GM18951 (cell line): ENCODE measurements at regions of chr15 and their contacts with region 1.

Region 1: DNA sequence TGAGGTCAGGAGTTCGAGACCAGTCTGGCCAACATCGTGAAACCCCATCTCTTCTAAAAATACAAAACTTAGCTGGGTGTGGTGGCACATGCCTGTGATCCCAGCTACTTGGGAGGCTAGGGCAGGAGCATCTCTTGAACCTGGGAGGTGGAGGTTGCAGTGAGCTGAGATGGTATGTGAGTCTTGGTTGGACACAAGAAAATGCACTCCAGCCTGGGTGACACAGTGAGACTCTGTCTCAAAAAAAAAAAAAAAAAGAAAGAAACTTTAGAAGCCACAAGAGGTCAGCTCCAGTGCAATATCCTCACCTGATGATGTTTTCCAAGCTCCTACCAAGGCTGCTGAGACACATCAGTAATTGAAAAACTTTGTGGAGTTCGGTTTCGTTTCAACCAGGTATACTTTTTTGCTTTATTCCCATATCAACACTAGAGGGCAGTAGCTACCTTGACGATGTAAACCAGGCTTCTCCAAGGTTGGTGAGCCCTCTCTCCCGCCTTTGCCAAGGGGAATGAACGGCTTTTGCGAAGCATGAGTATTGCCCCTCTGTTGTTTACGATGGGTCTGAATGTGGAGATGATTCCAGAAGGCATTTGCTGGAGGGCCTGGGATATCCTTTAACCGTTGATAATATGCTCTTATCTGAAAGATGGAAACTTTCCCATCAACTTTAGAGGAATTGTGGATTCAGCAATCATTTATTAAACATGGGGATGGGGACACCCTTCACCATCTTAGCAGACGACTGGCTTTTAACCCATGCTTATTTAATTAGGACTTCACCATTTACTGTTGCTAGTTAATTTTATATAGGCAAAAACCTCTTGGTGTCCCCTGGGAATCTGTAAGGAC is 202.8 kb downstream of the SV2B start:
- POLR2A ChIP-seq: no peak

Region 2: GRCh38 chr15:91535856-91536500 is 233.2 kb after region 1 on chr15:
- in situ Hi-C with region 1: no loop called
- POLR2A ChIP-seq: no peak

Region 3: DNA sequence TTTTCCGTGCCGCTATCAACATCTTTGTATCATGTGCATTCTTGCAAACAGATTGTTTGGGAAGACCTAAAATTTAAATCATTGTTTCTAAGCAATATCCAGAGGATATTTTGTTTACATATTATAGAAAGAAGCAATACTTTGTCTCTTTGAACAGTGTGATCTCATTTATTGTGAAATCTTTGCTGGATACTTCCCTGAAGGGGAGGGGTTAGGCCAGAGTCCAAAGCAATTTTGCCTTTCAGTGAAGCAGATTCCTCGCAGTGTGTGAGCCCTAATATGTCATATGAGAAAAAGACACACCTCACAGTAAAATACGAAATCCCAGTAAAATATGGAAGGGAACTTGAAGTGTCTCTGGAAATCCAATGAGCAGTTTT is 392.0 kb after region 1 on chr15:
- in situ Hi-C with region 1: loop called (anchors 25 kb)
- POLR2A ChIP-seq: no peak

Region 4: DNA sequence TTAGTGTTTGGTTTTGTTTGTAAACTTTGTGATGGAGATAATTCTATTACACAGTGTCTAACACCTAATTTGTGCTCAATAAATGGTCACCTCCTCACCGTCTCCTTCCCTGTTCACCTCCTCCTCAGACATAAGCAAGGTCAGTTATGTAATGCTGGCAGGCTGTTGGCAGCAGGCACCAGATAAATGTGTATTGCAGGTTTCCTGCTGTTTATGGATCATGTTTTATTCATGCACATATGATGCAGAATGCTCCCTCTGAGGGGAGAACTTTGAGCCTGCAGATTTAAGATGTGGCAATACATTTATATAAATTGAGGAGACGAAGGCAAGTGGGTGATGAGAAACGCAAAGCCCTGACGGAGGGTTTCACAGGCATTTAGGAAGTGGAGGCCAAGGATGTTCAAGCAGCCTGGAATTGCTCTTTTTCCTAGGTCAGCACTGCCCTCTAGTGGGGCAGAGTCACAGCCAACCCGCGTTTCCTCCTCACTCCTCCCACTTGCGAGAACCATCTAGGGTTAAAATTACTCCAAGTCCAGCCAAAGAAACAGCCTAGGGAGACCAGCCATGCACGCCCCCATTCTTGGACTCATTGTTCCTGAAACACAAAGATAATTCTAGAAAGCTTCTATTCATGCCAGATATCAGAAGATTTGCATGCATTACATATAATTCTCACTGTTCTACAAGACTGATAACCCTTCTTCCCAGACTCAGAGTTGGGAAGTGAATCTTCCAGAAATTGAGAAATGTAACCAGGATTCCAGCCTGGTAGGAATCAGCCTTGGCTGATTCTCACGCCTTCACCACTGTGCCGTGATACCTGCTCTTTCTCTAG is 779.4 kb after region 1 on chr15:
- in situ Hi-C with region 1: loop called (anchors 10 kb)
- POLR2A ChIP-seq: no peak